ENCODE measurements at regions of chr20 and their contacts with region 1.

Region 1: DNA sequence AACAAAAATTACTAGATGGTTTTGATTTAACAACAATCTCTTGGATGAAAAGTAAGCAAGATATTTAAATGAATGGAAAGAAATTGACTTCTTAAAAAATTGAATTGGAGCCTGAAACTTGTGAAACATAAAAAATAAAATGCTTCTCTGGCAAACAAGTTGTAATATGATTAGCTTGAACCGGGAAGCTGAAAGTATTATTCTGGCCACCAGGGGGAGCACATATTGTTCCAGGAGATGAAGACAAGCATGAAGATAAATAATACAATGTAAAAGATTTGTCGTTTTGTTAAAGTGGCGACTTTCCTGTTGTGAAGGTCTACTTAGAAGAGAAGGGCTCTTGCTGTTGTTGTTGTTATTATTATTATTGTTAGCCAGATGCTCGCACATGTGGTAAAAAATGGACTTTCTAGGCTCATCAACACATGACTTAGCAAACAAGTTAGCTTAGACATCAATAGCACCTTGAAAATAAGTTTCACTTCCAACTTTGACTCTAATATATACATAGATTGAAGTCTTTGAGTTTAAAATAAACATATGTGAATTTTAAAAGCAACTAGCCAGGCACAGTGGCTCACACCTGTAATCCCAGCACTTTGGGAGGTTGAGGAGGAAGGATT is 14.2 kb downstream of the PAX1 start:
- DNase-seq: peak; percentile 54 to 80 (median 63)
- H3K4me3 ChIP-seq: no peak overlapping the region
- H3K27ac ChIP-seq: no peak overlapping the region
- H3K4me1 ChIP-seq: no peaks in the 10 kb centered on the region
- H3K27me3 ChIP-seq: peaks cover 17% of the 10 kb centered on the region
- CTCF ChIP-seq: peak; percentile 53 to 84 (median 61)
- POLR2A ChIP-seq: no peak

Region 2: GRCh38 chr20:22106308-22106938 is 386.7 kb after region 1 on chr20:
- intact Hi-C with region 1: loop called (anchors 5 to 10 kb)
- DNase-seq: peak in 1 of 7 donors; percentile 4
- H3K4me3 ChIP-seq: no peak overlapping the region
- H3K27ac ChIP-seq: no peak overlapping the region
- H3K4me1 ChIP-seq: no peaks in the 10 kb centered on the region
- H3K27me3 ChIP-seq: no peaks in the 10 kb centered on the region
- CTCF ChIP-seq: peak; percentile 15 to 50 (median 40)
- POLR2A ChIP-seq: no peak

Region 3: DNA sequence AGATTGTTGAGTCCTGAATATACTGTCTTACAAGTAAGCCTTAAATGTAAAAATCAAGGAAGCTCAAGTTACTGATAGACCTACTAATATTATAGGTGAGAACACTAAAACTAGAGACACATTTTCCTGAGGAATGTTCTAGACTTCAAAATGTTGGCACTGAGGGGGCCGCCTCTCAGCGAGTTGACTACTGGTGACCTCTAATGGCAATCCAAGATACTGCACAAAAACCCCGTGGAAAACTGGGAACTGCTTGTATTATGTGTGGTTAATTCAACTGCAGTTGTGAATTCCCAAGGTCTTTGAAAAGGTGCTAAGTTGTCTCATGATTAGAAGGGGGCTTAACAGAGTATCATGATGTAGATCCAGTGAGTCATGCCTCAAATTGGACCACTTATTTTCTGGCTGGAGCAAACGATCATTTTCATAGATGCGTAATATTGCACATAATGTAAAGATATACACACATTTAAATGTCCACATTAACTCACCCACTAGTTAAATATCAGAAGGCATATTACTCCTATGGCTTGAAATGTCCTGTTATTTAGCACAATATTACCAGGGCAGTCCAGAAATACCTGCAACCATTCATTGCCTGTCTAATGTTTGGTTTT is 528.5 kb after region 1 on chr20:
- intact Hi-C with region 1: loop called in 1 of 2 experiments (anchors 10 kb)
- DNase-seq: peak in 3 of 7 donors; percentile 9 to 22 (median 19)
- H3K4me3 ChIP-seq: no peak overlapping the region
- H3K27ac ChIP-seq: no peak overlapping the region
- H3K4me1 ChIP-seq: no peaks in the 10 kb centered on the region
- H3K27me3 ChIP-seq: peaks cover 3% of the 10 kb centered on the region
- CTCF ChIP-seq: peak in 4 of 6 experiments; percentile 29 to 45 (median 32)
- POLR2A ChIP-seq: no peak

Region 4: DNA sequence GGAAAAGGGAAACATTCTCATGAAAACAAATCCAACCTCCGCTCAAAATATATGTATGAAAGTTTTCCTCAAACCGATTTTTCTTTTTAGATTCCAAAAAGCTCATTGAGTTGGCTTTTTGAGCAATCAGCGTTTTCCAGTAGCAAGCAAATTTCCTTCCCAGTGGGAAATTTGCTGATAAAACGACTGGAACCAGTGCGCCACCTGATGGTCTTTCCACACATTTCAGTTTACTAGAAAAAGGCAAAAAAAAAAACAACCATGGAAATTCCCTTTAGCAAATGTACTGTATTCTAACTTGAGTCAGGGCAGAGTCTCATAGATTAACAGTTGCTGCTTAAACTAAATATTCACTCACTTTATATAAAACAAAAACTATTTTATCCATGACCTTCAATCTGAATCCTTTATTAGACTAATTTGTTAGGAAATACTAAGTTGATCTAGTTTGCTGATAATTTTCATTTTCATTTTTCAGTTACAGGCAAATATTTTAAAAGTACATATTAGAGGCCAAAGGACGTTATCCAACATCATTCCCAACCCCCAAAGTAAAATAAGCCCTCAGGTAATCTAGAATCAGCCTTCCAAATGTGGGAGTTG is 593.1 kb after region 1 on chr20:
- intact Hi-C with region 1: loop called in 1 of 2 experiments (anchors 5 kb)
- DNase-seq: peak in 6 of 7 donors; percentile 19 to 60 (median 32)
- H3K4me3 ChIP-seq: no peak overlapping the region
- H3K27ac ChIP-seq: no peak overlapping the region
- H3K4me1 ChIP-seq: no peaks in the 10 kb centered on the region
- H3K27me3 ChIP-seq: no peaks in the 10 kb centered on the region
- CTCF ChIP-seq: peak; percentile 46 to 67 (median 54)
- POLR2A ChIP-seq: no peak

Measured in adrenal gland (tissue), 19 donors.